ENCODE measurements at regions of chr11 and their contacts with region 1.

Region 1: GRCh38 chr11:117817368-117818040 is 7.0 kb downstream of the FXYD2 start:
- DNase-seq: peak; percentile 89
- ATAC-seq: peak; percentile 11
- H3K4me3 ChIP-seq: peak overlapping the region in 4 of 5 experiments; percentile 2 to 62 (median 50)
- H3K4me3 Mint-ChIP-seq: peak overlapping the region; percentile 89
- H3K27ac ChIP-seq: peak overlapping the region in 1 of 2 donors; percentile 91
- H3K27ac Mint-ChIP-seq: peak overlapping the region; percentile 93
- H3K4me1 ChIP-seq: peaks cover 46 to 58% of the 10 kb centered on the region in 2 donors
- H3K4me1 Mint-ChIP-seq: peaks cover 55% of the 10 kb centered on the region
- H3K27me3 ChIP-seq: peaks cover 0 to 11% (median 2%) of the 10 kb centered on the region in 4 experiments
- H3K27me3 Mint-ChIP-seq: peaks cover 10% of the 10 kb centered on the region
- CTCF ChIP-seq: peak; percentile 98

Region 2: DNA sequence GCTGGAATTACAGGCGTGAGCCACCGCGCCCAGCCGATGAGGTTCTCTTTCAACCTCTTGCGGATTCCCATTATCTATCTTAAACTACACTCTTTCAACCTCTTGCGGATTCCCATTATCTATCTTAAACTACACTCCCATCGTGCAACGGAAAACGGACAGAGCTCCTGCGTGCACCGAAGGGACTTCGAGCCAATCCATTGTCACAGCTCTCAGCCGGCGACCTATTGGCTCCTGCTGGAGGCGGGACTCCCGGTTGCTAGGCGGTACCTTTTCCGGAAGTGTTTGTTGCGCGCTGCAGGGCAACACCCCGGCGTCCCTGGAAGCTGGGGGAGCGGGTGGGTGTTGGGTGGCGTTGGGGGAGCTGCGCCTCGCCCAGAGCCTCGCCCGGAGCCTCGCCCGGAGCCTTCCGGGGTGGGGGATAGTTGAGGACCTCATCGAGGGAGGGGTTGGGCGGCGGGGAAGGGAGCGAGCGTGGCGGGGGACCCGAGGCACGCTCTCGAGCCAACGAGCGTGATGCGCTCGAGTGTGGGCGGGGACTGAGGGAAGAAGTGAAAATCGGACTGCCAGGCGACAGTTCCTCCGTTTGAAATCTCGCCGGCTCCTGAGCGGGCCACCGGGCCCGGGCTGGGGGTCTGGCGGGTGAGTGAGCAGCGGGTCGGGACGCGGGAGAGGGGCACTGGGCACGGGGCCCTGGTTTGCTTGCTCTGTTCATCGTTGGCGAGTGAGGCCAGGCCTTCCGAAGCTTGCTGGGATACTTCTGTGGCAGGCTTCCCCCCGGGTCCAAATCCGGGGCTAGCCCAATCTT is 489.7 kb before region 1 on chr11 and contains the start of gene CEP164:
- CTCF ChIA-PET with region 1: no interaction called
- POLR2A ChIA-PET with region 1: no interaction called
- intact Hi-C with region 1: loop called (anchors 5 kb)
- DNase-seq: peak; percentile 97
- ATAC-seq: peak; percentile 92
- H3K4me3 ChIP-seq: peak within 1 kb of the TSS; percentile 57 to 88 (median 79)
- H3K4me3 Mint-ChIP-seq: peak within 1 kb of the TSS; percentile 71
- H3K27ac ChIP-seq: peak within 1 kb of the TSS; percentile 84 to 89
- H3K27ac Mint-ChIP-seq: peak within 1 kb of the TSS; percentile 65
- H3K4me1 ChIP-seq: peaks cover 6 to 11% of the 10 kb centered on the region in 2 donors
- H3K4me1 Mint-ChIP-seq: peaks cover 8% of the 10 kb centered on the region
- H3K27me3 ChIP-seq: no peaks in the 10 kb centered on the region
- H3K27me3 Mint-ChIP-seq: no peaks in the 10 kb centered on the region
- CTCF ChIP-seq: no peak
- total RNA-seq, gene CEP164: 48.7 and 54.8 TPM in 2 replicates

Region 3: DNA sequence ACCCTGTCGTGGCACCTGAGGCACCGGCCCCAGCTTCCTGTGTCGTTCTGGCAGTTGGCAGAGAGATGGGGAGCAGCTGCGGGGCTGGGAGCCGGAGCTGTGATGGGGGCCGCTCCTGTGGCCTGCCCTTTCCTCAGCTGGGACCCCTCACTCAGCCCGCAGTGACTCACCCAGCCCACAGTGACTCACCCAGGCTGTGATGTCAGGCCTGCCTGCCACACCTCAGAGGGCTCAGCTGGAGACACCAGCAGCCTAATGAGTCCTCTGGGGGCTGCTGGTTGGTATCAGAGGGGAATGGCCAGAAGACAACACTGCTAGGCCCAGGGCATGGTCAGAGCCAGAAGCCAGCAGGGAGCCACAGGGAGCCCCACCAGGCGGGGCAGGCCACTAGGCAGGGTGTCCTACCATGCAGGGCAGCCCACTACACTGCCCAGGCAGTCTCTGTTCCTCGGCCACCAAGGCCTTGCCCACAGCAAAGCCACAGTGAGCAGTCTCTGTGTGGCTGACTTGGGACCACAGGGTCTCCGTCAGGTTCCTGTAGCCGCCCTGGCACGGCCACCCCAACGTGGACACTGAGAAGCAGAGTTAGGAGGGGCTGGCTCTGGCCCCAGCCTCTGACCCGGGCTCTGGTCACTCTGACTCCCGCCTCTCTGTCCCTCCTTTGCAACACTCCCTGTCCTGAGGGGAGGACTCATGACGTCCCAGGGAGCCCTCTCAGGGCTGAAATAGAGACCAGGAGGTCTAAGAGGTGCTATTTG is 11.3 kb after region 1 on chr11:
- CTCF ChIA-PET with region 1: interaction called, 47 read pairs
- POLR2A ChIA-PET with region 1: interaction called, 4 read pairs
- intact Hi-C with region 1: loop called (anchors 1 kb)
- DNase-seq: peak; percentile 51
- ATAC-seq: peak; percentile 91
- H3K4me3 ChIP-seq: no peak overlapping the region
- H3K4me3 Mint-ChIP-seq: peak overlapping the region; percentile 57
- H3K27ac ChIP-seq: no peak overlapping the region
- H3K27ac Mint-ChIP-seq: peak overlapping the region; percentile 78
- H3K4me1 ChIP-seq: peaks cover 30 to 33% of the 10 kb centered on the region in 2 donors
- H3K4me1 Mint-ChIP-seq: peaks cover 38% of the 10 kb centered on the region
- H3K27me3 ChIP-seq: peaks cover 0 to 52% (median 9%) of the 10 kb centered on the region in 4 experiments
- H3K27me3 Mint-ChIP-seq: peaks cover 35% of the 10 kb centered on the region
- CTCF ChIP-seq: no peak

Region 4: GRCh38 chr11:117985953-117986887 is 168.7 kb after region 1 on chr11 and contains the start of gene IL10RA:
- CTCF ChIA-PET with region 1: interaction called, 4 read pairs
- POLR2A ChIA-PET with region 1: interaction called, 4 read pairs
- intact Hi-C with region 1: loop called (anchors 2 kb)
- DNase-seq: peak; percentile 92
- ATAC-seq: peak; percentile 92
- H3K4me3 ChIP-seq: peak within 1 kb of the TSS; percentile 82 to 99 (median 98)
- H3K4me3 Mint-ChIP-seq: peak within 1 kb of the TSS; percentile 92
- H3K27ac ChIP-seq: peak within 1 kb of the TSS; percentile 93 to 94
- H3K27ac Mint-ChIP-seq: peak within 1 kb of the TSS; percentile 94
- H3K4me1 ChIP-seq: peaks cover 54 to 75% of the 10 kb centered on the region in 2 donors
- H3K4me1 Mint-ChIP-seq: peaks cover 76% of the 10 kb centered on the region
- H3K27me3 ChIP-seq: no peaks in the 10 kb centered on the region
- H3K27me3 Mint-ChIP-seq: no peaks in the 10 kb centered on the region
- CTCF ChIP-seq: no peak
- total RNA-seq, gene IL10RA: 417 and 434 TPM in 2 replicates

Region 5: DNA sequence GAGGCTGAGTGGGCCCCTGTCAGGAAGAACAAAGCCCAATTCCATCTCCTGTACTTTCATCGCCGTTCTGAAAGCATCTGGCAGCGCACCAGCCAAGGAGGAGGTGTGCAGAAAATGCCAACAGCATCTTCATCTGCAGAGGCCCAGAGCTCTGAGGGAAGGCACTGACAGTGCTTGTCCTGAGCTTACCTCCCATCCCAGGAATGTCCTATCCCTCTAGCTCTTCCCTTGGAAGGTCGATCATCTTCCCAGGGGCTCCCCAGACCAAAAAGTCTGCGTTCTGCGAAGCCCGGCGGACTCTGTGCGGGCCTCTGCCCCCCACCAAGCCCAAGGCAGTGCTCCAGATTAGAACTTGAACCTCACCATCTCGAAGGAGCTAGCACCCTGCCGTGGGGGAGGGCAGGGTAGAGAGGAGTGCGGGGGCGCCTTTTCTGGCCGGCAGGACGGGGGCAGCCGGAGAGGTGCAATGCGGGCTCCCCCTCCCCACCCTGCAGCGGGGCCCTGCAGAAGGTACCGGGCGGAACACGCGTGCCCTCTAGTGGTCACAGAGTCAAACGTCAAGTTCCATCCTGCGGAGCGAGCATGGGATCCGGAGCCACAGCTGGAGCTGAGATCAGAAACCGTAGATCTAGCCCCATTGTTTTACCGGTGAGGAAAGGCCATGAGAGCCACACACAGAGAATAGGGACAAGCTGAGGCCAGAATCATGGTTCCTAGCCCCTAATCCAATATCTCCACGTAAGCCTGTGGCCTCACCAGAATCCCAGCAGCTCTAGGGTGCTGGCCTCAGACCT is 354.0 kb after region 1 on chr11:
- CTCF ChIA-PET with region 1: interaction called, 11 read pairs
- POLR2A ChIA-PET with region 1: no interaction called
- intact Hi-C with region 1: no loop called
- DNase-seq: peak; percentile 77
- ATAC-seq: peak; percentile 88
- H3K4me3 ChIP-seq: no peak overlapping the region
- H3K4me3 Mint-ChIP-seq: no peak overlapping the region
- H3K27ac ChIP-seq: no peak overlapping the region
- H3K27ac Mint-ChIP-seq: no peak overlapping the region
- H3K4me1 ChIP-seq: peaks cover 0 to 5% of the 10 kb centered on the region in 2 donors
- H3K4me1 Mint-ChIP-seq: peaks cover 3% of the 10 kb centered on the region
- H3K27me3 ChIP-seq: peaks cover 0 to 15% (median 1%) of the 10 kb centered on the region in 4 experiments
- H3K27me3 Mint-ChIP-seq: peaks cover 46% of the 10 kb centered on the region
- CTCF ChIP-seq: peak; percentile 96

Measured in B cell (primary cell).